Dorsolateral prefrontal cortex (tissue), 120 donors: ENCODE measurements at regions of chr1 and their contacts with region 1.

Region 1: GRCh38 chr1:52697795-52698674 is at the start of gene COA7:
- DNase-seq: peak; percentile 73 to 91 (median 83)
- H3K4me3 ChIP-seq: peak within 1 kb of the TSS; percentile 68 to 98 (median 89)
- H3K27ac ChIP-seq: peak within 1 kb of the TSS; percentile 13 to 95 (median 84)
- H3K27me3 ChIP-seq: no peaks in the 10 kb centered on the region
- CTCF ChIP-seq: peak in 38 of 56 donors; percentile 8 to 59 (median 35)
- total RNA-seq, gene COA7: 12.2 to 34.7 (median 23.8) TPM

Region 2: DNA sequence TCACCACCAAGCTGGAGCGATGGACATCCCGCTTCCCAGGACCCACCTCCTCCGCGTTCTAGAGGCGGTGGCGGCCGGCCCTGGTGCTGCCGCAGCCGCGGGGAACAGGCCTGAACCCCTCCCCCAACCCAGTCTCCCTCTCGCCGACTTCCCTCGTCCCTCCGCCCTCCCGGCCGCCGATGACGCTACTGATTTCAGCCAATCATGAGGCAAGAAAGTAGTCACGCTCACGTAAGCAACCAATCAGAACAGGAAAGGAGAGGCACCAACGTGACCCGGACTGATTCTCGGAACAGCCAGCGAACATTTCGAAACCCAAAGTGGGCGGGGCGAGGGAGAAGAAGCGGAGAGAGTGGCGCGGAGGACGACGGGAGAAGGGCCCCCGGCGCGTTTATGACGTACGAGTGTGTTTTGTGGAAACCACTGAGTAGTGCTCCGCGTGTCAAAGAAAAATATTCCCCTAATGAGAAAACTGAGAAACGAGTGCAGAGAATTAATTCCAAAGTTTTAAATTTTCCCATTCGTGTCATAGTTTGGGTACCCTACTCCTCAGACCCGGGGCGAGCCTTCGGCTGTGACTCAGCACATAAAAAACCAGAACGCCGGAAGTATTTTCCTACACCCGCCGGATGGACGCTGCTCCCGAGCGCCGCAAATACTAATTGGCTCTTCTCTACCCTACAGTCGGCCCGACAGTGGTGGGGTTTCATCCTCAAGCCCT is 819.3 kb before region 1 on chr1 and contains the start of gene NRDC:
- intact Hi-C with region 1: loop called in 1 of 2 experiments (anchors 5 kb)
- DNase-seq: peak; percentile 97 to 100 (median 100)
- H3K4me3 ChIP-seq: peak within 1 kb of the TSS; percentile 70 to 100 (median 95)
- H3K27ac ChIP-seq: peak within 1 kb of the TSS; percentile 88 to 100 (median 96)
- H3K27me3 ChIP-seq: peaks cover 0 to 29% (median 0%) of the 10 kb centered on the region in 45 donors
- CTCF ChIP-seq: peak in 16 of 56 donors; percentile 4 to 34 (median 12)
- total RNA-seq, gene NRDC: 108 to 175 (median 151) TPM

Region 3: DNA sequence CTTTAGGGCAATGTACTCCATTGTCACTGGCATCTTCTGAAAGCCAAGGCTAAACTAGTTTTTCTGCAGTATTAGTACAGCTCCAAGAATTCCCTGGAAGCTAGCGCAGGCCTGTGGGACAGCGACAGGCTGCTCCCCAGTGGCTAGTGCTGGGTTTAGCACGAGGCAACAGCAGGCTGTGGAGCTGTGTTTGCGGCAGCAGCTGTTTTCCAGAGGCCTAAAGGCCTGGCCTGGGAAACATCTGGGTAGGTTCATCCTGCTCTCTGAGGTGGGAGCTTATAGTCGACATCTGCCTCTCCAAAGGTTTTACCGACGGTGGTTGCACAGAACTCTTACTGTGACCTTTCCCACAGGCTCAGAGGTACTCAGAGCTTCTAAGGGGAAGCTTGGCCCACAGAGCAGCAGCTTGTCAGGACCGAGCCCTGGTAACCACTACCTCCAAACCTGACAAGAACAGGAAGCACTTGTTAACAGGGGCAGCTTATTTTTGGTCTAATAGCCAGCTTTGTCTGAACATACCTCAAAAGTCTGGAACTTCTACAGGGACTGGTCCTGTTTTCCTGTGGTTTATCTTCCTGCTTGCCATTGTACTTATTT is 349.2 kb before region 1 on chr1:
- intact Hi-C with region 1: no loop called
- DNase-seq: peak in 7 of 10 donors; percentile 38 to 76 (median 66)
- H3K4me3 ChIP-seq: no peak overlapping the region
- H3K27ac ChIP-seq: peak overlapping the region in 47 of 59 donors; percentile 0 to 74 (median 40)
- H3K27me3 ChIP-seq: no peaks in the 10 kb centered on the region
- CTCF ChIP-seq: peak in 48 of 56 donors; percentile 11 to 65 (median 42)

Region 4: GRCh38 chr1:52365746-52366516 is 332.1 kb before region 1 on chr1 and contains the start of gene CC2D1B:
- intact Hi-C with region 1: loop called in 1 of 2 experiments (anchors 5 kb)
- DNase-seq: peak; percentile 87 to 98 (median 92)
- H3K4me3 ChIP-seq: peak within 1 kb of the TSS; percentile 66 to 99 (median 94)
- H3K27ac ChIP-seq: peak within 1 kb of the TSS; percentile 55 to 98 (median 92)
- H3K27me3 ChIP-seq: no peaks in the 10 kb centered on the region
- CTCF ChIP-seq: peak in 45 of 56 donors; percentile 10 to 61 (median 40)
- total RNA-seq, gene CC2D1B: 15.7 to 56.7 (median 29.3) TPM

Region 5: GRCh38 chr1:52404116-52404986 is 293.7 kb before region 1 on chr1 and contains the starts of genes ORC1 and PRPF38A:
- intact Hi-C with region 1: loop called (anchors 5 to 10 kb)
- DNase-seq: peak; percentile 96 to 99 (median 98)
- H3K4me3 ChIP-seq: peak within 1 kb of the TSS; percentile 31 to 99 (median 90)
- H3K27ac ChIP-seq: peak within 1 kb of the TSS in 57 of 59 donors; percentile 20 to 96 (median 85)
- H3K27me3 ChIP-seq: no peaks in the 10 kb centered on the region
- CTCF ChIP-seq: peak in 44 of 56 donors; percentile 8 to 56 (median 38)
- total RNA-seq, gene ORC1: 0.17 to 1.3 (median 0.44) TPM in 115 of 120 experiments, not detected in the others
- total RNA-seq, gene PRPF38A: 30.5 to 72.7 (median 39.3) TPM

Region 6: GRCh38 chr1:52552505-52553361 is 145.3 kb before region 1 on chr1 and contains the start of gene TUT4:
- intact Hi-C with region 1: loop called (anchors 2 to 5 kb)
- DNase-seq: peak; percentile 60 to 81 (median 74)
- H3K4me3 ChIP-seq: peak within 1 kb of the TSS; percentile 68 to 100 (median 95)
- H3K27ac ChIP-seq: peak within 1 kb of the TSS; percentile 30 to 97 (median 89)
- H3K27me3 ChIP-seq: no peaks in the 10 kb centered on the region
- CTCF ChIP-seq: peak in 1 of 56 donors; percentile 3
- total RNA-seq, gene TUT4: 50.8 to 116 (median 76.8) TPM

Region 7: DNA sequence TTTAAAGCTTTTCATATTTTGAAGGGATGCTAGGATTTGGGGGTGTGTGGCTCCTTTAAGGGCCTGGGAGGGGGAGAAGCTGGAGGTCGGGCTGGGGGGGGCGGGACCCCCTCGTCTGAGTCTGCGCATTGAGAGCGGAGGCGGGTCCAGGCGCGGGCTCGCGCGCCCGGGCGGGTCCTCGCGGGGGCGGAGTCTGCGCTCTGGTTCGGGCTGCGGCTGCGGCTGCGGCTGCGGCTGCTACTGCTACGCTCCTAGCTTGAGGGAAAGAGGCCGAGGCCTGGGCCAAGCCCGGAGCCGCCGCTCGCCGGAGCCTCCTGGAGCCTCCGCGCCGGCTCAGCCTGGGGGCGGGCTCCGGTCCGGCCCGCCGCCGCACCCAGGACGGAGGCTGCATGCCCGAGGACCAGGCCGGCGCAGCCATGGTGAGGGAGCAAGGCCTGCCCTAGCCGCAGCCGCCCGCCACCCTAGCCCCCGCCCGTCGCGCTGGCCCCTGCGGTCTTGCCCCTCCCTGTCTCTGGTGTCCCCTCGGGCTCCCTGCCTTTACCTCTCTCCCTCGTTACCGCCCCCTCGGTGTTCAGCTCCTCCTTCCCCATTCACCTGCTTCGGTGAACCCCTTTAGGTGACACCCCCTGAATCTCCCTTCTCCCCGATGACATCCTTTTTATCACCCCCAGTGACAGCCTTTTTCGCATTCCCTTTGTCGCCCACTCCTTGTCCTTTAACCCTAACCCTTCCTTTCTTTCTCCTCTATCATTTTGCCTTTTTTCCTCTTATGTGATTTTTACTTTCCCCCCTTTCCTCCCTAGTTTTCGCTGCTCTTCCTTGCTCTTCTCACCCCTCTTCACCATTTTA is 28.5 kb after region 1 on chr1 and contains the start of gene ZYG11B:
- intact Hi-C with region 1: loop called (anchors 1 kb)
- DNase-seq: peak; percentile 79 to 91 (median 85)
- H3K4me3 ChIP-seq: peak within 1 kb of the TSS; percentile 58 to 98 (median 91)
- H3K27ac ChIP-seq: peak within 1 kb of the TSS in 56 of 59 donors; percentile 18 to 92 (median 83)
- H3K27me3 ChIP-seq: no peaks in the 10 kb centered on the region
- CTCF ChIP-seq: peak in 21 of 56 donors; percentile 12 to 47 (median 29)
- total RNA-seq, gene ZYG11B: 45.4 to 96.2 (median 73.5) TPM

Region 8: GRCh38 chr1:52927212-52928014 is 229.4 kb after region 1 on chr1 and contains the start of gene SCP2:
- intact Hi-C with region 1: loop called in 1 of 2 experiments (anchors 10 kb)
- DNase-seq: peak; percentile 55 to 89 (median 72)
- H3K4me3 ChIP-seq: peak within 1 kb of the TSS; percentile 60 to 95 (median 81)
- H3K27ac ChIP-seq: peak within 1 kb of the TSS in 57 of 59 donors; percentile 14 to 92 (median 81)
- H3K27me3 ChIP-seq: peaks cover 0 to 15% (median 0%) of the 10 kb centered on the region in 45 donors
- CTCF ChIP-seq: peak in 5 of 56 donors; percentile 6 to 30 (median 8)
- total RNA-seq, gene SCP2: 53.5 to 119 (median 87.1) TPM